ENCODE measurements at regions of chr1 and their contacts with region 1.

Region 1: GRCh38 chr1:175373786-175374623 is 181.4 kb upstream of the KIAA0040 start:
- DNase-seq: peak; percentile 58
- CTCF ChIP-seq: peak; percentile 76

Region 2: GRCh38 chr1:175062858-175063257 is 311.1 kb before region 1 on chr1:
- CTCF ChIA-PET with region 1: no interaction called
- POLR2A ChIA-PET with region 1: no interaction called
- DNase-seq: no peak
- CTCF ChIP-seq: no peak

Region 3: GRCh38 chr1:175390081-175390481 is 16.1 kb after region 1 on chr1:
- CTCF ChIA-PET with region 1: interaction called, 10 read pairs
- POLR2A ChIA-PET with region 1: no interaction called
- DNase-seq: no peak
- CTCF ChIP-seq: no peak

Region 4: DNA sequence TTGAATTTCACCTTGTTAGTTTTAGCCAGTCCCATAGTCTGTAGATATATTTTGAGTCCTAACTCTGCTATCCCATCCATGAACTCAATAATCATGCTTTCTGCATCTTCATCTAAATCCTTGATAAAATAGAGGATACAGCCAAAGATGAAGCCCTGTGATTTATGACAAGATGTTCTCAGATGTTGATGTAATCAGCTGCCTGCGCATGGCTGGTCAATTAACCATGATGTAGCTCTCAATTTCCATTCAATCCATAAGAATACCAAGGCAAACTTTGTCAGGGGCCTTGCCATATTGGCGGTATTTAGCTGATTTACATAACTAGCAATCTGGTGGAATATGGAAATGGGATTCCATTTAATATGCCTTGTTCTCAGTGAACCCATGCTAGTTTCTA is 186.2 kb after region 1 on chr1:
- CTCF ChIA-PET with region 1: no interaction called
- POLR2A ChIA-PET with region 1: no interaction called
- DNase-seq: no peak
- CTCF ChIP-seq: no peak

Region 5: DNA sequence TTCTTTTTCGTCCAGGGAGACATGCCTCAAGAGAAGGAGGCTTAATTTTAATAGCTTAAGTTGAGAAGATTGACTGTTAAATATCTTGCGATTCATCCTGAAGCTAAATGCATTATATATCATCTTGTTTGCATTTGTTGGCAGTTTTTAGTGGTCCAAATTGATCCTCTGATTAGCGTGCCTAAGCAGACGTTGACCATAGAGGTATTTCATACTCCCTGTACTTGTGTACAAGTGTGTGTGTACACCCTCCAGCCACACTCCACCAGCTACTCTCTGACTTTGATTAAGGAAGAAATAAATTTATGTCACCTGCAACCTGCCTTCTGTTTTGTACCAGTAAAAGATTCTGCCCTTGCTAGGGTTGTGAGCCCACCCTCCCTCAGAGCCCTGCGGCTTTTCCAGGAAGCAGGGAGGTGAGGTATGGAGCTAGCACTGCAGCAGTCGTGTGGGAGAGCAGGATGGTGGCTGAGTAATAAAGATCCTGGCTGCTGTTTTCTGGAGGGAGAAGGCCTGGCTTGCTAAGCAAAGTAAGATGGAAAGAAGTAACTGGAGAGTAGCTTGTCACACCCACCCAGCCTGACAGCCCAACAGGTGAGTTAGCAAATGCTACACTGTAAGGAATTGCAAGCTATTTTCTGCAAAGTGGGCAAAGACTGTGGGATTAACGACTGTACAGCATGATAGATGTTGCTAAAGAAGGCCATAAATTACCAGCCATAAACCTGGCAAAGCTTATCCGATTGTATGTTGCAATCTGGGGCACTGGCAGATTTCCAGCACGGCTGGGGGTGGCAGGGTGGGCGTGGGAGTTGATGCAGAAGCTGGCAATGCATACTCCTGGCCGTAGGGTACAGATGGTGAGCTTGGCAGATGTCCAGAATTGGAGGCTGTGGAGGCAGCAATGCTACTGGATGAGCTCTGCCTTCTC is 199.2 kb after region 1 on chr1:
- CTCF ChIA-PET with region 1: no interaction called
- POLR2A ChIA-PET with region 1: no interaction called
- DNase-seq: no peak
- CTCF ChIP-seq: no peak

Region 6: DNA sequence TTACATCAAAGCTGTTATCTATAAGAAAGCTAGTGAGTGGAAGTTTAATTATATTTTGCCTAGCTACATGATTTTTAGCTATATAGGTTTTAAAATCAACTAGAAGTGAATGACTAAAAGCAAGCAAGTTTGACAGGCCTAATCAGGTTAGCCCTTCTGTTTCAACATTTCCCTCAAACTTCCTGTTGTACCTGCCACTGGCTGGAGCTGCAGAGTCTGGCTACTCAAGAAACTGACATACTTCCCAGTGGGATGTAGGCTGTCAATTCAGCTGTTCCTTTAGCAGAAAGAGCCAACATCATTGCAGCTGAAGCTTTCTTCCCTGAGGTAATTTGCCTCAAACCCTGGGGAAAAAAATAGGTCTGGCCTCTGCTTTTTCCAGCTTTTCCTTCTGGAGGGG is 456.5 kb after region 1 on chr1:
- CTCF ChIA-PET with region 1: no interaction called
- POLR2A ChIA-PET with region 1: no interaction called
- DNase-seq: no peak
- CTCF ChIP-seq: no peak

Measured in GM10248 (cell line).